ENCODE measurements at regions of chr2 and their contacts with region 1.

Region 1: DNA sequence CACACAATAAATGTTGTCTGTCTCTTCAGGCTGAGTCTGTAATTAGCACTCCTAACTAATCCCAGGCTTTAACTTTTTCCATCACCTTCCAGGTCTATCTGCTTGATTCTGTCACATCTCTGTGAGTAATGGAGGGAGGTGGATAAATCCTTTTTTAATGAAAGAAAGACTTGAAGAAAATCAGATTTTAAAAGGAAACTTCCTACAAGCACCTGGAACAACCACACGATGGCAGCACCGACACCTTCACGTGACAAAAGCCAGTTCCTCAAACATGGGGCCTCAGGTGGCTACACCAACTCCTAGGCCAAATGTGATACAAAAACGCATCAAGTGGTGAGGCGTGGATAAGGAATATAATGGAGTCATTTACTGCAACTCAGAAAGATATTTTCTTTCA is 41.8 kb downstream of the TGFBRAP1 start:
- DNase-seq: no peak
- H3K4me3 ChIP-seq: no peak overlapping the region
- H3K27me3 ChIP-seq: no peaks in the 10 kb centered on the region
- CTCF ChIP-seq: peak; percentile 48

Region 2: DNA sequence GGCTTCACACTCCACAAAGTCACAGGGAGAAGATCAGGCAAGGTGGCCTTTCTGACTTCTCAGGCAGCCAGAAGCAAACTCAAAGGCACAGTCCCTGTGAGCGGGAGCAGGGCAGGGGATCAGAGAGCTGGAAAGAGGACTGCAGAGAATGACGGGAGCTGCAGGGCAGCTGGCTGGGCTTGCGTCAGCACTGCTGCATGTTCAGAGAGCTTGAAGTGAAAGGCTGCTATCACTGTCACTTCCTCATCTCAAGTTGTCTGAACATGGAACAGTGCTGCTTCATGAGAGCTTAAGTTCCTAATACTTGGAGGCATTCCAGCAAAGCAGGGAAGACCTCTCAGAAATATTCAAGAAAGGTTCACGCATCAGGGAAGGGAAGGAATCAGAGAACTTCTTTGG is 21.5 kb after region 1 on chr2:
- CTCF ChIA-PET with region 1: interaction called, 12 read pairs
- POLR2A ChIA-PET with region 1: no interaction called
- DNase-seq: no peak
- H3K4me3 ChIP-seq: no peak overlapping the region
- H3K27me3 ChIP-seq: no peaks in the 10 kb centered on the region
- CTCF ChIP-seq: no peak

Measured in BJ (cell line).